ENCODE measurements at regions of chr12 and their contacts with region 1.

Region 1: DNA sequence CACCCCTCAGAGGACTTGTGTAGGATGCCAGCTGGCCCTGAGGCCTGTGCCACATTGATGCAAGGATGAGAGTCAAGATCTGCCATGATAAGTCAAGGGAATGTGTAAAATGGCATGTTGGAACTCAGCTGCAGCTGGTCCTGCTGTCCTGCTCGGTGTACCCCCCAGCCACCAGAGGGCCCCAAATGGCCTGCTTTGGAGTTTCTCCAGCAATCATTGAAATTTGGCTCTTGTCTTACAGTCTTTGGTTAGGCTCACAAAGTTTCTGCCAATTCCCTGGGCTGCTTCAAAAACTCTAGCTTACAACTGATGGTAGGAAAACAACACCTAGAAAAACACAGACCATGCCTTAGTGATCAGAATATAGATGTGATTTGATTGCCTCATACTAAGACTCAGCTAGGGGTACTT is 76.8 kb downstream of the HSD17B6 start:
- ATAC-seq: peak in 3 of 8 experiments; percentile 70 to 83 (median 72)
- H3K4me3 ChIP-seq: no peak overlapping the region
- H3K27ac ChIP-seq: no peak overlapping the region
- H3K4me1 ChIP-seq: no peaks in the 10 kb centered on the region

Region 2: DNA sequence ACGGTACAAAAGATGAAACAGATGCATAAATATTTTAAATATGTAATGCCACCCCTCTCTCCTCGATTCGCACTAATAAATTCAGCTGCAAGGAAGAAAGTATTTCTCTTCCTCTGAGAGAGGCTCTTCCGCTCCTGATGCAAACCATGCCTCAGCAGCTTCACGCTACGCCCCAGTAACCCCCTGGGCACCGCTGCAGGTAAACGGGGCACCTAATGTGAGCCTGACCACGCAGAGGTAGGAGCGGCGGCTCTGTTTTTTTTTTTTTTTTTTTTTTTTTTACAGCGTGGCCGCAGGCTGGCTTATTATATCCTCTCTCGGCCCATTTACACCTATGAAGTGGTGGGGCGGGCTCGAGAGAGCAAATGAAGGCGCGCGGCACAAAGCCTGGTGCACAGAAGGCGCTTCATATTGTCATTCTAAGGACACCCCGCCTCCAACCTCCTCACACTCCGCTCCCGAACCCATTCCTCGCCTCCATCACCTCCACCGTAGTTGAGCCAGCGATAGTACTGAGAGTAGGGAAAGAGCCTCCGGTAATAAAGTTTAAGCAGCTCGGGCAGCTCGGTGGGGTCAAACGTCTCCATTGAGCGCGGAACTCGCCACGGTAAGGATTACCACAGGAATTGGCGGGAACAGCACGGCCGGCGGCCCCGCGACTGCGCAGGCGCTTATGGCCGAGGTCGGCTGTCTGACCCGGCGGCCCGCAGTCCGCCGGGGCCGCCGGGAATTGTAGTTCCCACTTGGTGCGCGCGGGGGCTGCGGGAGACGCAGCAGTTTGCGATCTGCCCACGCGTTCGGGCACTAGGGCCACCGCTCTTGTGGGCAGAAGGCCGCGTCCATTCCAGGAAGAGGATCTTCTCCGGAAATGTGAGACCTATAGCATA is 88.0 kb before region 1 on chr12 and contains the start of gene PRIM1:
- in situ Hi-C with region 1: loop called in 1 of 9 experiments (anchors 10 kb)
- ATAC-seq: peak; percentile 91 to 96 (median 94)
- H3K4me3 ChIP-seq: peak within 1 kb of the TSS; percentile 64 to 92 (median 73)
- H3K27ac ChIP-seq: peak within 1 kb of the TSS; percentile 8 to 41
- H3K4me1 ChIP-seq: peaks cover 5% of the 10 kb centered on the region in 2 donors
- total RNA-seq, gene PRIM1: 2.7 to 33.1 (median 18.7) TPM

Region 3: DNA sequence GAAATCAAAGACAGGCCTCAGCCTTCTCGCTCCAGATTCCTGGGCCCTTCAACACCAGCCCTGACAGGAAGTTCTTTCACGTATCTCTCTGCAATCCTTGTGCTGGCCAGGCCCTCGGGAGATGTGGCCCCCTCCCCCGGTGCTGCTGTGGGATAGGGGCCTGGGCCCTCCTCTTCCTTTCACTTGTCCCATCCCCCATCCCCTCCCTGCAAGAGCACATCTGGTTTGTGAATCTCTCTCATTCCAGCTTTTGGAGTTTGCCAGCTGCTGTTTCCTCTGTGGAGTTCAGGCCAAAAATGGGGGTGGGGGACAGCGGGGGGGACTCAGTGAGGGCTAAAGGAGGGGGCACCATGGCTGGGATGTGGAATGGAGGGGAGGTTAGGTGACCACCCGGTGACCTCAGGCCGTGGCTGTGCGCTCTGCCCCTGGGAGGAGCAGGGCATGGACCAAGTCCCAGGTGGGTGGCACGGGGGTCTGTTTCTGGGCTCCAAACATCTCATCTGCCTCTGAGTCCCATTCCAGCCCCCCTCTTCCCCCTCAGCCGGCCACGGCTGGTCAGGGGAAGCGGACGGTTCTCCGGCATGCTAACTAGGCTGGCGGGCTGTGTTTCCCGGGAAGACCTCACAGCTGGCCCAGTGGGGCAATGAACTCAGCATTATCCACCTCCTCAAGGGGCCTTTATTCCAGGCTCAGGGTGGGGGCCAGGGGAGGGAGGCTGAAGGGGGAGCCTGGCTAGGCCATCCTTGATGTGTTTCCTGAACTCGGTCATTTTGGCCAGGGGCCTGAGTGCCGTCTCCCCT is 295.8 kb after region 1 on chr12:
- in situ Hi-C with region 1: no loop called
- ATAC-seq: peak in 6 of 8 experiments; percentile 6 to 89 (median 88)
- H3K4me3 ChIP-seq: peak overlapping the region in 2 of 5 donors; percentile 0 to 1
- H3K27ac ChIP-seq: peak overlapping the region; percentile 49 to 73
- H3K4me1 ChIP-seq: peaks cover 47 to 59% of the 10 kb centered on the region in 2 donors

Measured in motor neuron (in vitro differentiated cells).